Astrocyte of the cerebellum (primary cell): ENCODE measurements at regions of chr22 and their contacts with region 1.

Region 1: DNA sequence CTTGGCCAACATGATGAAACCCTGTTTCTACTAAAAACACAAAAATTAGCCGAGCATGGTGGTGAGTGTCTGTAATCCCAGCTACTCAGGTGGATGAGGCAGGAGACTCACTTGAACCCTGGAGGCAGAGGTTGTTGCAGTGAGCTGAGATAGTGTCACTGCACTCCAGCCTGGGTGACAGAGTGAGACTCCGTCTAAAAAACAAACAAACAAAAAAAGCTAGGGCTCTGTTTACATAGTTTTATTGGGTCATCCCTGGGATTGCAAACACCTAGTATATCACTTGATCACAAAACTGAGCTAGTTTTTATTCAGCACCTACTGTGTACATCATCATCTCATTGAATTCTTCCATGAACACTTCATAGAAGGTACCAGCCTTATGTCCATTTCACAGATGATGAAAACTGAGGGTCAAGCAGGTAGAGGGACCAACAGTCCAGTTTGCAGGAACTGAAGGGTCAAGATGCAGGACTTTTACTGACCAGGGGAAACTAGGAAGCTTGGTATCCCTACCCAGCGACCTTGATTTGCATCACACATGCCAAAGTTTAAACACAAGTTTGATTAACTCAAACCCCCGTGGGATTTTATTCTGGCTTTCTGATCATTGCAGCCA is 9.2 kb upstream of the MRTFA start:
- DNase-seq: no peak
- H3K4me3 ChIP-seq: no peak overlapping the region
- CTCF ChIP-seq: no peak

Region 2: GRCh38 chr22:40519284-40519947 is 126.3 kb before region 1 on chr22:
- in situ Hi-C with region 1: loop called (anchors 5 kb)
- DNase-seq: no peak
- H3K4me3 ChIP-seq: no peak overlapping the region
- CTCF ChIP-seq: no peak

Region 3: DNA sequence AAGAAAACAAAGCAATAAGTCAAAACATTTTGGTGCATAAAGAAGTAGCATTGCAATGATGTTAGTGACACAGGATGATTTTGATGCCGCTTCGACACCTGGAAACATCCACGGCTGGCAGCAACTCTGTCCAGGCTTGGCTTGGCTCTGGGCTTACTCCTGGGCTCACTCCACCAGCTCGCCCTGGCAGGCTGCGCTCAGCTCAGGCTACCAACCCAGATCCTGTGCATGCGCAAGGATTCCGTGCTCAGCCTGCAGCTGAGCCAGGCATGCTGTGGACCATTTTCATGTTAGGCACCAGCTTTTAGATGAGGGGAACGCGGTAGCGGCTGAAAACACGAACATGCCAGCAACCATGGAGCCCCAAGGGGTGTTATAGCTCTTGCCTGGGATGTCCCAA is 107.4 kb after region 1 on chr22:
- in situ Hi-C with region 1: no loop called
- DNase-seq: no peak
- H3K4me3 ChIP-seq: no peak overlapping the region
- CTCF ChIP-seq: no peak